RWPE1 (cell line): ENCODE measurements at regions of chr7 and their contacts with region 1.

Region 1: GRCh38 chr7:129210256-129210988 is 14.4 kb upstream of the AHCYL2 start:
- DNase-seq: peak; percentile 50
- H3K27ac ChIP-seq: no peak overlapping the region
- CTCF ChIP-seq: peak; percentile 88

Region 2: GRCh38 chr7:129091484-129092002 is 118.9 kb before region 1 on chr7:
- CTCF ChIA-PET with region 1: interaction called, 12 read pairs
- POLR2A ChIA-PET with region 1: no interaction called
- DNase-seq: peak; percentile 76
- H3K27ac ChIP-seq: no peak overlapping the region
- CTCF ChIP-seq: peak; percentile 100

Region 3: GRCh38 chr7:129163875-129164544 is 46.4 kb before region 1 on chr7:
- CTCF ChIA-PET with region 1: interaction called, 18 read pairs
- POLR2A ChIA-PET with region 1: no interaction called
- DNase-seq: peak; percentile 26
- H3K27ac ChIP-seq: no peak overlapping the region
- CTCF ChIP-seq: peak; percentile 94